G401 (cell line): ENCODE measurements at regions of chr3 and their contacts with region 1.

Region 1: DNA sequence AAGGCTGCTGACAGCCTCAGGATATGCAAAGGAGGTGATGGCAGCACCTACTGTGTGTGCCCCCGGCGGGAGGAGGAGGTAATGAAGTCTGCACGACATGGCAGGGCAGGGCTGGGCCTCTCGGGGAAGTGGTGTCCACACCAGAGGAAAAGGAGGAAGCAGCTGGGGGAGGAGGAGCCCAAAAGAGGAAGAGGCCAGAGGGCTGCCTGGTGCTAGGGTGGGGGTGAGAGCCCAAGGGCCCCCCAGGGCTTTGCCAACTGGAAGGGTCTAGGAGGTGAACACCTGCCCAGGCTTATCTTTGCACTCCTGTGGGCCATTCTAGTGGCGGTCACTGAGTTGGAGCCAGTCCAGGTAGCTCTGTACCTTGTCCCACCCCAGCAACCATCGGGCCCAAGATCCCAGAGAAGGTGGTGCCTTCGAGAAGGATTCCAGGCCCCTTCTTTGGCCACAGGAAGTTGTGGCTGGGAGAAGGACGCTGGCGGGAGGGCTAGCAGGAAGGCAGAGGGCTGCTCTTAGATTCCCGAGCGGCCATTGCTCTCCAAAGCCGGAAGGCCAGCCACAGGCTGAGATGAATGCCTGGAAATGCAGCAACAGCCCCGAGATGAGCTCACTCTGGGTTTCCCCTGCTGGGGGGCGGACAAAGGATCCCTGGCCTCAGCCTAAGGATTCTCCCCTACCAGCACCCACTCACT is 7.0 kb downstream of the GNAI2 start:
- DNase-seq: no peak

Region 2: GRCh38 chr3:50327943-50328691 is 85.1 kb after region 1 on chr3 and contains the start of gene TUSC2:
- in situ Hi-C with region 1: loop called (anchors 5 kb)
- DNase-seq: peak; percentile 98
- total RNA-seq, gene TUSC2: 45.0 and 45.4 TPM in 2 replicates